ENCODE measurements at regions of chr1 and their contacts with region 1.

Region 1: GRCh38 chr1:151976858-151977257 is 16.8 kb downstream of the S100A10 start:
- DNase-seq: no peak
- H3K4me3 ChIP-seq: no peak overlapping the region
- H3K4me3 Mint-ChIP-seq: peak overlapping the region; percentile 56
- H3K27ac Mint-ChIP-seq: peak overlapping the region; percentile 85
- H3K4me1 ChIP-seq: peaks cover 94% of the 10 kb centered on the region
- H3K4me1 Mint-ChIP-seq: peaks cover 71% of the 10 kb centered on the region
- H3K27me3 ChIP-seq: no peaks in the 10 kb centered on the region
- H3K27me3 Mint-ChIP-seq: no peaks in the 10 kb centered on the region
- CTCF ChIP-seq: no peak

Region 2: DNA sequence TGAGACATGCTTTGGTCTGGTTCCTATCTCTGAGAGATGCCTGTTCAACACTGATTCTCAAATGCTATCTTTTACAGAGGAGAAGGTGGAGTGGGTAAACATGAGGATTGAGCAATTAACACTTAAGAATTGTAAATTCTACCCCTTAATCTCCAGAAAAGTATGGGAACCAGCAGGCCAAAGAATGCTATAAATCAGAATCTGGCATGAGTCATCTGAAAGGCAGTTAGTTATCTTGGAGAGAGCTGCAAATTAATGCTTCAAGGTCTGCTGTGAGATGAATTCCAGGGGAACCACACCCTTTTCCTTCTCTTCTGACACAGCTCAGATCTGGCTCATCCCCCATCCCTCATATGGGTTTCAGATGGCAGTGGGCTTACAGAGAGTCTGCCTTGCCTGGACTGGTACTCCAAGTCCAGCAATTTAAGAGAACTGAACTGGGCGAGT is 11.6 kb after region 1 on chr1:
- CTCF ChIA-PET with region 1: interaction called, 8 read pairs
- POLR2A ChIA-PET with region 1: interaction called, 80 read pairs
- intact Hi-C with region 1: loop called (anchors 1 kb)
- DNase-seq: peak; percentile 83 to 88
- H3K4me3 ChIP-seq: no peak overlapping the region
- H3K4me3 Mint-ChIP-seq: peak overlapping the region; percentile 88
- H3K27ac Mint-ChIP-seq: peak overlapping the region; percentile 99
- H3K4me1 ChIP-seq: peaks cover 67% of the 10 kb centered on the region
- H3K4me1 Mint-ChIP-seq: peaks cover 54% of the 10 kb centered on the region
- H3K27me3 ChIP-seq: no peaks in the 10 kb centered on the region
- H3K27me3 Mint-ChIP-seq: no peaks in the 10 kb centered on the region
- CTCF ChIP-seq: no peak

Region 3: GRCh38 chr1:151993654-151994496 is 17.0 kb after region 1 on chr1 and contains the start of gene S100A10:
- CTCF ChIA-PET with region 1: interaction called, 249 read pairs
- POLR2A ChIA-PET with region 1: interaction called, 80 read pairs
- intact Hi-C with region 1: loop called (anchors 1 kb)
- DNase-seq: peak; percentile 90 to 91
- H3K4me3 ChIP-seq: peak within 1 kb of the TSS; percentile 88
- H3K4me3 Mint-ChIP-seq: peak within 1 kb of the TSS; percentile 88
- H3K27ac Mint-ChIP-seq: peak within 1 kb of the TSS; percentile 99
- H3K4me1 ChIP-seq: peaks cover 55% of the 10 kb centered on the region
- H3K4me1 Mint-ChIP-seq: peaks cover 34% of the 10 kb centered on the region
- H3K27me3 ChIP-seq: no peaks in the 10 kb centered on the region
- H3K27me3 Mint-ChIP-seq: no peaks in the 10 kb centered on the region
- CTCF ChIP-seq: no peak
- total RNA-seq, gene S100A10: 2,143 and 2,154 TPM in 2 replicates

Region 4: GRCh38 chr1:152309955-152310354 is 333.1 kb after region 1 on chr1:
- CTCF ChIA-PET with region 1: no interaction called
- POLR2A ChIA-PET with region 1: no interaction called
- intact Hi-C with region 1: no loop called
- DNase-seq: peak in 1 of 2 experiments; percentile 12
- H3K4me3 ChIP-seq: no peak overlapping the region
- H3K4me3 Mint-ChIP-seq: no peak overlapping the region
- H3K27ac Mint-ChIP-seq: no peak overlapping the region
- H3K4me1 ChIP-seq: no peaks in the 10 kb centered on the region
- H3K4me1 Mint-ChIP-seq: no peaks in the 10 kb centered on the region
- H3K27me3 ChIP-seq: no peaks in the 10 kb centered on the region
- H3K27me3 Mint-ChIP-seq: peaks cover 25% of the 10 kb centered on the region
- CTCF ChIP-seq: no peak

Measured in Caco-2 (cell line).